HAP-1 (cell line): ENCODE measurements at regions of chr14 and their contacts with region 1.

Region 1: GRCh38 chr14:94689218-94689984 is 77.2 kb downstream of the SERPINA3 start:
- DNase-seq: peak; percentile 49 to 87
- H3K4me3 ChIP-seq: peak overlapping the region; percentile 5; the same call in 1 of the 2 replicates
- H3K4me1 ChIP-seq: no peaks in the 10 kb centered on the region
- H3K27me3 ChIP-seq: no peaks in the 10 kb centered on the region

Region 2: DNA sequence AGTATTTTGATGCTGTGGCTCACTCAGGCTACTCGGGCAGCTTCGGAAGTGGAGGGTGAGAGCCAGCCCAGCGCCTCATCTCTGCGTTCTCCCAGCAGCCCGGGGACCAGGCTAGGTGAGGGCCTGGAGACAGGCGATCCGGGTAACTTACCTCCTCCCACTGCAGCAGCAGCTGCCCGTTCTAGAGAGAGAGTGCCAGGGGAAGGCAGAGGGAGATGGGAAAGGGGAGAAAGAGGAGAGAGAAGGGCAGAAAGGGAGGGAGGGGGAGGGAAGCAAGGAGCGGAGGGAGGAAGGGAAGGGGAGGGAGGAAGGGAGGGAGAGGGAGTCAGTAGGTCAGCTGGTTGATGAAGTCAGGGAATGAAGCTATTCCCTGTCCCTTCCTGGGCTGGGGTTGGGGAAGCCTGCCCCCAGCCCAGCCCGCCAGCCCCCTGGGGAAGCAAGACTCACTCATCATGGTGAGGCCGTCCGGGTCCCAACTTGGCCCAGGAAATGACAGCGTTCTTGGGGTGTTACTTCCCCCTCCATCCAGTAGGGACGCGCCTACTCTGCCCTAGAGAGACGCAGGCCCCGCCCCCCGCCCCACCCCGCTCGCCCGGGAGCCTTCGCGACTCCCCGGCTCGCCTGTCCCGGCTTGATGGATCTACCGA is 560.2 kb before region 1 on chr14 and contains the start of gene IFI27L2:
- in situ Hi-C with region 1: loop called (anchors 25 kb)
- DNase-seq: peak; percentile 82 to 89
- H3K4me3 ChIP-seq: peak within 1 kb of the TSS; percentile 40
- H3K4me1 ChIP-seq: peaks cover 8% of the 10 kb centered on the region
- H3K27me3 ChIP-seq: no peaks in the 10 kb centered on the region

Region 3: GRCh38 chr14:94612174-94612573 is 77.2 kb before region 1 on chr14 and contains the start of gene SERPINA3:
- in situ Hi-C with region 1: no loop called
- DNase-seq: no peak
- H3K4me3 ChIP-seq: no peak within 1 kb of the TSS
- H3K4me1 ChIP-seq: no peaks in the 10 kb centered on the region
- H3K27me3 ChIP-seq: peaks cover 4% of the 10 kb centered on the region; the same call in 1 of the 2 replicates

Region 4: GRCh38 chr14:95098984-95099599 is 409.7 kb after region 1 on chr14:
- in situ Hi-C with region 1: loop called (anchors 5 kb)
- DNase-seq: peak; percentile 51 to 70
- H3K4me3 ChIP-seq: no peak overlapping the region
- H3K4me1 ChIP-seq: peaks cover 16% of the 10 kb centered on the region
- H3K27me3 ChIP-seq: no peaks in the 10 kb centered on the region

Region 5: GRCh38 chr14:95442633-95443021 is 753.2 kb after region 1 on chr14:
- in situ Hi-C with region 1: loop called (anchors 25 kb)
- DNase-seq: peak; percentile 51 to 83
- H3K4me3 ChIP-seq: no peak overlapping the region
- H3K4me1 ChIP-seq: no peaks in the 10 kb centered on the region
- H3K27me3 ChIP-seq: no peaks in the 10 kb centered on the region